Activated CD4-positive, alpha-beta T cell treated with anti-CD3 and anti-CD28 coated beads for 36 hours (primary cell): ENCODE measurements at regions of chr1 and their contacts with region 1.

Region 1: DNA sequence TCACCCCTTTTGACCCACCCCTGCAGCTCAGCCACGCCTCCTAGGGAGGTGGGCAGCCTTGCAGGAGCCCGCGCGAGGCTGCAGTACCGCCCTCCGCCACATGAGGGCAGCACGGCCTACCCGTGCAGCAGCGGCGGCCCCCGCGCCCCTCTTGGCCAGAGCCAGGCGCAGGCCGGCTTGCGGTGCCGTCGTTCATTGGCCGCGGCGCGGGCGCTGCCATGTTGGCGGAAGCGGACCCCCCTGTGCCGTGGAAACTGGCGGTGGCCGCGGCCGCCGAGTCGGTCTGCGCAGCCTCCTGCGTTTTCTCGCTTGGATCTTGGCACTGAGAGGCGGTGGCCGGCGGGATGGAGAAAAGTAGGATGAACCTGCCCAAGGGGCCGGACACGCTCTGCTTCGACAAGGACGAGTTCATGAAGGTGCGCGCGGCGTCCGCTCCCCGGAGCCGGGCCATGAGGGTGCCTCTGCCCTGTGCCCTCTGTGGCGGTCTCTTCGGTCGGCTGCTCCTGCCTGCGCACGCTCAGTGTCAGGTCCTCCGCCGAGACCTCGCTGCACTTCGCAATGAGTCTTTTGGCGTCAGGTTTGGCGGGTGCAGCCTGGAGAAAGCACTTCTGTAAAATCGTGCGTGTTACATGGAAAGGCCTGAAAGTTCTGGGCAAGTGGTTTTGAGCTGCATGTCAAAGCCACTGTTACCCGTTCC is at the start of gene COG2:
- DNase-seq: peak; percentile 97
- ATAC-seq: peak; percentile 92
- H3K4me3 Mint-ChIP-seq: peak within 1 kb of the TSS; percentile 96
- H3K27ac Mint-ChIP-seq: peak within 1 kb of the TSS; percentile 88
- H3K4me1 Mint-ChIP-seq: peaks cover 48% of the 10 kb centered on the region
- H3K27me3 Mint-ChIP-seq: peaks cover 13% of the 10 kb centered on the region
- total RNA-seq, gene COG2: 28.1 to 32.0 TPM

Region 2: DNA sequence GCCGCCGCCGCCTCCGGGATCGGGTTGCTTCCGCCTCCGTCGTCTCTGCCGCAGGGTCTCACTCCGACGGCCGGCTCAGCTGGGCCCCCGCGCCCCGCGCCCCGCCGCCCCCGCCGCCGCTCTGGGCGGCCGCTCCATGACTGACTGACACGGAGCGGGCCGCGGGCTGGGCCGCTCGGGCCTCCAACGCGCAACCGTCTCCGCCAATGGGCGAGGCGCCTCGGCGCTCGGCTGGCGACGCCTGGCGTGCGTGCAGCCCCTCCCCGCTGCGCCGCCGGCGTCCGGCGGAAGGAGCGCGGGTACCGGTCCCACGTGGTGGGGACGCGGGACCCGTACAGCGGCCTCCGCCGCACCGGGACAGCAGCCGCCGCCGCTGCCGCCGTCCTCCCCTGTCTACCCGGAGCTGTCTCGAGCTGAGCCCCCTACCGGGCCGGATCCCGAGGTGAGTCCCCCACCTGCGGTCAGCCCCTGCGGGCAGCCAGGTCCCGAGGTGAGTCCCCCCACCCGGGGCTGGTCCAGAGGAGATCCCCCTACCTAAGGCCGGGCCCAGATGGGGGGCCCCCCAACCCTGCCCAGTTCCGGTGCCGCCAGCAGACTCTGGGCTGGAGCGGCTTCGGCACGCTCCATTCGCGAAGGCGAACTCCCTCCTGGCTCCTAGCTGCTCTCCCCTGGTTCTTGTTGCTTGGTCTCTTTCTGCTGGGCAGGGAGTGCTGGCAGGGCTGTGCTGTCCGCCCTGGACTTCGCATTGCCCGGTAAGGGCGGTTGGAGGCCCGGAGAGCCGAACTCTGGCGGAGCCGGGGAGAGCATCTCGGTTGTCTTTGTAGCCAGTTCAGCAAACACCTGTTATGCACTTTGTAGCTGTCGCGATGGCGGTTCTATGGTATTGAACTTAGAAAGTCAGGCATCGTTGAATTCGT is 1016.2 kb before region 1 on chr1 and contains the starts of genes TAF5L and URB2:
- CTCF ChIA-PET with region 1: no interaction called
- POLR2A ChIA-PET with region 1: no interaction called
- intact Hi-C with region 1: loop called in 1 of 2 experiments (anchors 1 kb)
- DNase-seq: peak; percentile 93
- ATAC-seq: peak; percentile 92
- H3K4me3 Mint-ChIP-seq: peak within 1 kb of the TSS; percentile 89
- H3K27ac Mint-ChIP-seq: peak within 1 kb of the TSS; percentile 96
- H3K4me1 Mint-ChIP-seq: peaks cover 57% of the 10 kb centered on the region
- H3K27me3 Mint-ChIP-seq: no peaks in the 10 kb centered on the region
- total RNA-seq, gene TAF5L: 16.5 to 17.6 TPM
- total RNA-seq, gene URB2: 13.9 to 16.5 TPM

Region 3: DNA sequence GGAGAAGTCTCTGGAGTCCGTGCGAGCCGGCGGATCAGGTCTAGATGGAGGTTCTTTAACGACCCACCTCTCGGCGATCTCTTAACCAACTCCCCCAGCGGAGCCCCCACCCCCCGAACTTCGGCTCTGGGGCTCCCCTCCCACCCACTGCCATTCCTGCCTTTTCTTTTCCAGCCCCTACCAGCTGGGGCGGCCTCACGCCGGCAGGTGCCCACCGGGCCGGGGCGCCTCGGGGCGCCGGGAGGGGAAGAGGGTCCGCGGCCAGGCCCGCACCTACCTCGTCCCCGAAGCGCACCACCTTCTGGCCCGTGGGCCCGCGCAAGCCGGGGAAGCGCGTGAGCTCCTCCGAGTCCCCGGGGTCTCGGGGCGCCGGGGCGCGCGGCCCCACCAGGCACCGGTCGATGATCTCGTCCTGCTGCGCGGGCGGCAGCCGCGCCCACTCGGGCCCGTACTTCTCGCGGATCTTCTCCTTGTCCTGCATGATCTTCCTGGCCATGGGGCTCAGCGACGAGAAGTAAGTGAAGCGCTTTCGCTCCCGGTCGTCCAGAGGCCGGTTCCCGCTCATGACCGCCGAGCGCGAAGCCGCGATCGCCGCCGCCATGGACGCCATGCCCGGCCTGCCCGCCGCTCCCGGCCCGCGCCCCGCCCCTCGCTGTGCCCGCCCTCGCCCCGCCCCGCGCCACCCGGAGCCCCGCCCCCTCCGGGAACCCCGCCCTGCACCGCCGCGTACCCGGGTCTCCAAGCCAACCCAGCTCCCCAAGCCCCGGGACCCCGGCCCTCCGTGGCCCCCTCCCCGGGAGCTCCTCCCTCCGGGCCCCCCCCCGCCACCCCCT is 225.7 kb after region 1 on chr1 and contains the start of gene C1orf198:
- CTCF ChIA-PET with region 1: interaction called, 3 read pairs
- POLR2A ChIA-PET with region 1: no interaction called
- intact Hi-C with region 1: loop called in 1 of 2 experiments (anchors 1 kb)
- DNase-seq: peak; percentile 86
- ATAC-seq: peak; percentile 90
- H3K4me3 Mint-ChIP-seq: peak within 1 kb of the TSS; percentile 80
- H3K27ac Mint-ChIP-seq: peak within 1 kb of the TSS; percentile 21
- H3K4me1 Mint-ChIP-seq: peaks cover 22% of the 10 kb centered on the region
- H3K27me3 Mint-ChIP-seq: peaks cover 14% of the 10 kb centered on the region
- total RNA-seq, gene C1orf198: 5.8 to 6.9 TPM

Region 4: DNA sequence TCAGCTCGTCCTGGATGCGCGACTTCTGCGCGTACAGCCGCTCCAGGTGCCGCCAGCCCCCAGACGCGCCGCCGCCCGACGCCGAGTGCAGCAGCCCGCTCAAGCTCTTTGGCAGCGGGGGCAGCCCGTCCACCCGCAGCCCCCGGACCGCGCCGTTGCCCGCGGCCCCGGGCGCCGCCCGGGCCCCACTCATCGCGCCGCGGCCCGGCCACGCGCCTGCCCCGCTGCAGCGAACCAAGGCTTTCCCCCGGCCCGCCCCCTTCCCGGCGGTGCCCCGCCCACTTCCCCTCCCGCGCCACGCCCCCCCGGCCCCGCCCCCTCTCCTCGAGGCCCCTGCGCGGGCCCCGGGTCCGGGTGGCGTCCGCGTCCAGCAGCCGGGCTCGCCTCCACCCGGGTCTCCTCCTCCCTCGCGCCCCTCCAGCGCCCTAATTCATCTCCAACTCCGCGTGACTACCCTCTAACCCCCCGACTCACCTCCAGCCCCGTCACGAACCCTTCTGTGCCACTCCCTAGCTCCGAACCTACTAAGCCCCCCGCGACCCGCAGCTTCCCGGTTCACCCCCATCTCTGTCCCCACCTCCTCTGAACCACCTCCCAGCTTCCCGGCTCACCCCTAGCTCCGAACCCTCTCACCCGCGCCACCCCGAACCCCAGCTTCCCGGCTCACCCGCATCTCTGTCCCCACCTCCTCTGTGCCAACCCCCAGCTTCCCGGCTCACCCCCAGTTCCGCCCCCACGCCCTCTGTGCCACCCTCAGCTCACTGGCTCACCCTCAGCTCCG is 397.8 kb after region 1 on chr1 and contains the start of gene FAM89A:
- CTCF ChIA-PET with region 1: no interaction called
- POLR2A ChIA-PET with region 1: no interaction called
- intact Hi-C with region 1: loop called in 1 of 2 experiments (anchors 1 kb)
- DNase-seq: peak; percentile 88
- ATAC-seq: peak; percentile 76
- H3K4me3 Mint-ChIP-seq: peak within 1 kb of the TSS; percentile 75
- H3K27ac Mint-ChIP-seq: peak within 1 kb of the TSS; percentile 37
- H3K4me1 Mint-ChIP-seq: peaks cover 35% of the 10 kb centered on the region
- H3K27me3 Mint-ChIP-seq: peaks cover 4% of the 10 kb centered on the region
- total RNA-seq, gene FAM89A: 14.5 to 14.9 TPM

Region 5: GRCh38 chr1:231337472-231338269 is 695.3 kb after region 1 on chr1 and contains the start of gene EXOC8:
- CTCF ChIA-PET with region 1: no interaction called
- POLR2A ChIA-PET with region 1: no interaction called
- intact Hi-C with region 1: loop called in 1 of 2 experiments (anchors 1 kb)
- DNase-seq: peak; percentile 97
- ATAC-seq: peak; percentile 82
- H3K4me3 Mint-ChIP-seq: peak within 1 kb of the TSS; percentile 93
- H3K27ac Mint-ChIP-seq: peak within 1 kb of the TSS; percentile 98
- H3K4me1 Mint-ChIP-seq: peaks cover 44% of the 10 kb centered on the region
- H3K27me3 Mint-ChIP-seq: no peaks in the 10 kb centered on the region
- total RNA-seq, gene EXOC8: 10.0 to 13.7 TPM